Caco-2 (cell line): ENCODE measurements at regions of chr10 and their contacts with region 1.

Region 1: GRCh38 chr10:37263341-37263740 is 137.9 kb downstream of the ANKRD30A start:
- DNase-seq: peak in 1 of 2 experiments; percentile 37
- H3K4me3 ChIP-seq: no peak overlapping the region
- H3K4me3 Mint-ChIP-seq: no peak overlapping the region
- H3K27ac Mint-ChIP-seq: no peak overlapping the region
- H3K4me1 ChIP-seq: no peaks in the 10 kb centered on the region
- H3K4me1 Mint-ChIP-seq: no peaks in the 10 kb centered on the region
- H3K27me3 ChIP-seq: no peaks in the 10 kb centered on the region
- H3K27me3 Mint-ChIP-seq: no peaks in the 10 kb centered on the region
- CTCF ChIP-seq: peak; percentile 54 to 74

Region 2: GRCh38 chr10:36888929-36889573 is 374.3 kb before region 1 on chr10:
- CTCF ChIA-PET with region 1: interaction called, 7 read pairs
- POLR2A ChIA-PET with region 1: no interaction called
- intact Hi-C with region 1: loop called (anchors 1 kb)
- DNase-seq: peak; percentile 84 to 89
- H3K4me3 ChIP-seq: no peak overlapping the region
- H3K4me3 Mint-ChIP-seq: no peak overlapping the region
- H3K27ac Mint-ChIP-seq: no peak overlapping the region
- H3K4me1 ChIP-seq: peaks cover 5% of the 10 kb centered on the region; the same call in 1 of the 2 replicates
- H3K4me1 Mint-ChIP-seq: peaks cover 7% of the 10 kb centered on the region
- H3K27me3 ChIP-seq: no peaks in the 10 kb centered on the region
- H3K27me3 Mint-ChIP-seq: no peaks in the 10 kb centered on the region
- CTCF ChIP-seq: peak; percentile 96

Region 3: GRCh38 chr10:36899651-36900050 is 363.7 kb before region 1 on chr10:
- CTCF ChIA-PET with region 1: interaction called, 3 read pairs
- POLR2A ChIA-PET with region 1: no interaction called
- intact Hi-C with region 1: loop called (anchors 1 kb)
- DNase-seq: no peak
- H3K4me3 ChIP-seq: no peak overlapping the region
- H3K4me3 Mint-ChIP-seq: no peak overlapping the region
- H3K27ac Mint-ChIP-seq: no peak overlapping the region
- H3K4me1 ChIP-seq: no peaks in the 10 kb centered on the region
- H3K4me1 Mint-ChIP-seq: no peaks in the 10 kb centered on the region
- H3K27me3 ChIP-seq: no peaks in the 10 kb centered on the region
- H3K27me3 Mint-ChIP-seq: no peaks in the 10 kb centered on the region
- CTCF ChIP-seq: no peak

Region 4: DNA sequence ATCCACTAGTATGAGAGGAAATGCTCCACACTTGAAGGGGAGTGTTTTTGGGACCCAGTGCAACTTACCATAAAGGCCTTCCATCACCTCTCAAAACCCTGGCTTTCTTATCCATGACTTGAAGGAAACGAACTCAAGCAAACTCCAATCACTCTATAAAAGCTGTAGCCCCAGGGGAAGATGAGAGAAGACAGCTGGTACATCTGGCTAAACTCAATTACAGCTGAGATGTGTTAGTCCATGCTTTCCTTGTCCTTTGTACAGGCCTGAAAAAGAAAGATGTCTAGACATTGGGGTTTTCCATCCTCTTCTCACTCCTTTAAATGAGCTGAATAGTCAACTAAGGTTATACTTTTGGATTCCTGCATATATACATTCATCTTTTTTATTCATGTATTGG is 227.5 kb before region 1 on chr10:
- CTCF ChIA-PET with region 1: no interaction called
- POLR2A ChIA-PET with region 1: no interaction called
- intact Hi-C with region 1: loop called (anchors 10 kb)
- DNase-seq: no peak
- H3K4me3 ChIP-seq: no peak overlapping the region
- H3K4me3 Mint-ChIP-seq: no peak overlapping the region
- H3K27ac Mint-ChIP-seq: no peak overlapping the region
- H3K4me1 ChIP-seq: peaks cover 10% of the 10 kb centered on the region; the same call in 1 of the 2 replicates
- H3K4me1 Mint-ChIP-seq: peaks cover 6% of the 10 kb centered on the region
- H3K27me3 ChIP-seq: no peaks in the 10 kb centered on the region
- H3K27me3 Mint-ChIP-seq: no peaks in the 10 kb centered on the region
- CTCF ChIP-seq: no peak

Region 5: DNA sequence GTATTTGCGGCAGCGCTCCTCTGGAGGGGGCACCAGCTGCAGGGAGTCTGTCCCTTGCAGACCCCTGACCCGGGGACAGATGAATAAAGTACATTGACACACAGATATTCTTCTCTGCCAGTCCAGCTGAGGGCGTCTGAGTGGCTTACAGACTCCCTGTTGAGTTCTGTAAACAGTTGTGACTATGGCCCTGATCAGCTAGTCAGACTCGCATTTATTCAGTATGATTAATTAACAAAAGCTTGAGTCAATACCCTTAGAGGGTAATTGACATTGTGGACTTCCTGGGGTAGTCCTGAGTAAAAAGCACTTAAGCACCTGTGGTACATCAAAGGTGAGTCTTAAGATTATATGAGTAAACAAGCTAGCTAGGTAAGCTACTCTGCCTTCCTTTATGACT is 116.9 kb before region 1 on chr10:
- CTCF ChIA-PET with region 1: interaction called, 3 read pairs
- POLR2A ChIA-PET with region 1: no interaction called
- intact Hi-C with region 1: loop called (anchors 1 kb)
- DNase-seq: peak; percentile 70 to 71
- H3K4me3 ChIP-seq: no peak overlapping the region
- H3K4me3 Mint-ChIP-seq: no peak overlapping the region
- H3K27ac Mint-ChIP-seq: no peak overlapping the region
- H3K4me1 ChIP-seq: peaks cover 10% of the 10 kb centered on the region
- H3K4me1 Mint-ChIP-seq: peaks cover 14% of the 10 kb centered on the region
- H3K27me3 ChIP-seq: no peaks in the 10 kb centered on the region
- H3K27me3 Mint-ChIP-seq: no peaks in the 10 kb centered on the region
- CTCF ChIP-seq: peak; percentile 32 to 43